H1 (cell line): ENCODE measurements at regions of chr18 and their contacts with region 1.

Region 1: DNA sequence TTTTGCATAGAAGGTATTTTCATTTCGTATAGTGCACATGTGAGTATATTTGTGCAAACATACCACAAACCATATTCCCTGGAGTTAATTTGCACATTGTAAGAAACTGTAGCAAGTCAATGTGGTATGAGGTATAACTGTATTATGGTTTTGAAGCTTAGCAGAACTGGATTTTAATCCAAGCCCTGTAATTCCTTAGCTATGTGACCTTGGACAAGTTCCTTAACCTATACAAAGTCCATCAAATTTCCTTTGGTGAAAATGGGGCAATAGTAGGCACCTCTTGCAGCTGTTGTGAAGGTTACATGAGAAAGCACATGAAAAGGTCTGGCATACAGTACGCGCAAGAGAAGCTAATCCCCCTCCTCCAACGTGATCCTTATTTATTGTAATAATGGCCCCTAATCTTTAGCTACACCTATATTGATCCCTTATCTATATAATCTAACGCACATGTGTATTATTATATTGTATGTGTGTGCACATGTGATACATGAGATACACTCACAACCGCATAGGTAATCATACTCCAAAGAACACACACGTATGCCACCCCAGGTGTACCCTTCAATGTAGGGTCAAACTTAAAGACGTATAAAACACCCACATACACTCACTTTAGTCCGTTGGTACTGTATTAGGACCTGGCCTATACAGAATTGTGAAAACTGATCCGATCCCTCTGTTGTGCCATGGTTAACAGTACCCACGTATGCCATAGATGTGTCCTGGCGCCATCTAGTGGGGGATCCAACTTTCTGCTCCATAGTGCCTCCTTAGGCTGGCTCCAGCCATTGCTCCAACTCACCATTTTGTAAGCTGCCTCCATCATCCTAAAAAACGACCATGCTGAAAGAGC is 402.9 kb upstream of the SLC14A2 start:
- DNase-seq: peak; percentile 61 to 87
- H3K4me3 ChIP-seq: no peak overlapping the region
- H3K27ac ChIP-seq: no peak overlapping the region
- H3K4me1 ChIP-seq: no peaks in the 10 kb centered on the region
- H3K27me3 ChIP-seq: no peaks in the 10 kb centered on the region
- CTCF ChIP-seq: peak; percentile 96 to 100 (median 100)
- EP300 ChIP-seq: no peak
- POLR2A ChIP-seq: no peak
- RAD21 ChIP-seq: peak; percentile 95 to 96

Region 2: DNA sequence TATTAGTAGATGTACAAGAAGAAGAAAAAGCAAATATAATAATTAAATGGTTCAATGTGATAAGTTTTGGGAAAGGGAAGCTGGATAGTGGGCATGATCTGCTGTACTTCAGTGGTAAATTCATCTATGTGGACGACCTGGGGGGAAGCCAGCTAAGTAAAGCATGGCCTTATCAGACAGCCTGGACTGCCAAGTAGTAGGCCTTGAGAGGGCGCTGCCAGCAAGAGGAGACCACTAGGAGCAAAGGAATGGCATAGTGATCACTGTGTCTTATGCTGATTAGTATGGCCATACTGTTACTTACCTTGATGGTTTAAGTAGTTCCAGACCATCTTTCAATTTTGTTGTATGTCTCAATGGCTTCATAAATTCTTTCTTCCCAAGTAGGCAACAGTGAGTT is 244.1 kb before region 1 on chr18:
- CTCF ChIA-PET with region 1: no interaction called
- POLR2A ChIA-PET with region 1: no interaction called
- DNase-seq: no peak
- H3K4me3 ChIP-seq: no peak overlapping the region
- H3K27ac ChIP-seq: no peak overlapping the region
- H3K4me1 ChIP-seq: peaks cover 0 to 4% (median 0%) of the 10 kb centered on the region in 4 experiments; a peak in 3 of 7 replicates
- H3K27me3 ChIP-seq: no peaks in the 10 kb centered on the region
- CTCF ChIP-seq: peak; percentile 57 to 72 (median 59)
- EP300 ChIP-seq: no peak
- POLR2A ChIP-seq: no peak
- RAD21 ChIP-seq: peak; percentile 51 to 65

Region 3: GRCh38 chr18:45227001-45227742 is 14.8 kb after region 1 on chr18:
- CTCF ChIA-PET with region 1: interaction called, 28 read pairs
- POLR2A ChIA-PET with region 1: interaction called, 3 read pairs
- DNase-seq: no peak
- H3K4me3 ChIP-seq: no peak overlapping the region
- H3K27ac ChIP-seq: no peak overlapping the region
- H3K4me1 ChIP-seq: no peaks in the 10 kb centered on the region
- H3K27me3 ChIP-seq: no peaks in the 10 kb centered on the region
- CTCF ChIP-seq: no peak
- EP300 ChIP-seq: no peak
- POLR2A ChIP-seq: no peak
- RAD21 ChIP-seq: no peak

Region 4: DNA sequence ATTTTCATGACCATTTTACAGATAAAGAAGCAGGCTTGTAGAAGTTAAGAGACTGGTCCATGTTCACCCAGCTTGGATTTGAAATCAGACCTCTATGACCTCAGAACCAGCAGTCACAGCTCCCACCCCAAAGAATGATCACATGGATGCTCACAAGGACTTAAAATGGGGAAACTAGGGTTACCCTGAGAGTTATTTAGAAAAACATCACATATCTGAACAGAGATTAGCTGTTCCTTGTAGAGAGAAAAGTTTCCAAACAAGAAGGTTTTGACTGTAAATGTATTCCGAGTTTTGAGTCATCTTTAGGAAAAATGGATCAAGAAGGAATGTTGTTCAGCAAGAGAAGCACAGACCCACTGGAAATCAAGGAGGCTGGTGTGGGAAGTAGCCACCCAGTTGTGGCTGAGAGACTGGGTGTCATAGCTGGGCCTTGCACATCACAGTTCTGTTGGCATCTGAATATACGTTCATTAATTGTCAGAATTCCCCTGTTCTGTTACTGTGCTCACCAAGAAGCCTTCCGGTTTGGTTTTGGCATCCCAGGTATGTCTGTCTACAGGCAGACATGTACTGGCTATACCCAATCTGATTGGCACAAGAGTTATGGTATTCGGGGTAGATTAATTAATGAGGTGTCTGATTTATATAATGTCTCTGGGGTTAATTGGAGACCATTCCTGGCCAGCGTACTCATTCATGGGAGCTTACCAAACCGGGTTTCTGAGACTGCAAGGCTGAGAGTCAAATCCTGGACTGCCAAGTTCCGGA is 31.1 kb after region 1 on chr18:
- CTCF ChIA-PET with region 1: interaction called, 10 read pairs
- POLR2A ChIA-PET with region 1: no interaction called
- DNase-seq: no peak
- H3K4me3 ChIP-seq: no peak overlapping the region
- H3K27ac ChIP-seq: no peak overlapping the region
- H3K4me1 ChIP-seq: no peaks in the 10 kb centered on the region
- H3K27me3 ChIP-seq: no peaks in the 10 kb centered on the region
- CTCF ChIP-seq: no peak
- EP300 ChIP-seq: no peak
- POLR2A ChIP-seq: no peak
- RAD21 ChIP-seq: no peak